Naive thymus-derived CD4-positive, alpha-beta T cell (primary cell): ENCODE measurements at regions of chr22 and their contacts with region 1.

Region 1: GRCh38 chr22:42090596-42091454 is at the start of gene NDUFA6:
- DNase-seq: peak; percentile 92 to 99 (median 98)
- ATAC-seq: peak; percentile 93
- H3K4me3 ChIP-seq: peak within 1 kb of the TSS; percentile 96
- H3K4me3 Mint-ChIP-seq: peak within 1 kb of the TSS; percentile 94 to 99 (median 98)
- H3K27ac ChIP-seq: peak within 1 kb of the TSS; percentile 96
- H3K27ac Mint-ChIP-seq: peak within 1 kb of the TSS; percentile 92 to 100 (median 99)
- H3K4me1 ChIP-seq: peaks cover 15 to 22% of the 10 kb centered on the region in 2 donors
- H3K4me1 Mint-ChIP-seq: peaks cover 14 to 56% (median 36%) of the 10 kb centered on the region in 7 donors
- H3K27me3 ChIP-seq: no peaks in the 10 kb centered on the region
- H3K27me3 Mint-ChIP-seq: no peaks in the 10 kb centered on the region
- total RNA-seq, gene NDUFA6: 35.0 to 66.4 (median 40.6) TPM

Region 2: DNA sequence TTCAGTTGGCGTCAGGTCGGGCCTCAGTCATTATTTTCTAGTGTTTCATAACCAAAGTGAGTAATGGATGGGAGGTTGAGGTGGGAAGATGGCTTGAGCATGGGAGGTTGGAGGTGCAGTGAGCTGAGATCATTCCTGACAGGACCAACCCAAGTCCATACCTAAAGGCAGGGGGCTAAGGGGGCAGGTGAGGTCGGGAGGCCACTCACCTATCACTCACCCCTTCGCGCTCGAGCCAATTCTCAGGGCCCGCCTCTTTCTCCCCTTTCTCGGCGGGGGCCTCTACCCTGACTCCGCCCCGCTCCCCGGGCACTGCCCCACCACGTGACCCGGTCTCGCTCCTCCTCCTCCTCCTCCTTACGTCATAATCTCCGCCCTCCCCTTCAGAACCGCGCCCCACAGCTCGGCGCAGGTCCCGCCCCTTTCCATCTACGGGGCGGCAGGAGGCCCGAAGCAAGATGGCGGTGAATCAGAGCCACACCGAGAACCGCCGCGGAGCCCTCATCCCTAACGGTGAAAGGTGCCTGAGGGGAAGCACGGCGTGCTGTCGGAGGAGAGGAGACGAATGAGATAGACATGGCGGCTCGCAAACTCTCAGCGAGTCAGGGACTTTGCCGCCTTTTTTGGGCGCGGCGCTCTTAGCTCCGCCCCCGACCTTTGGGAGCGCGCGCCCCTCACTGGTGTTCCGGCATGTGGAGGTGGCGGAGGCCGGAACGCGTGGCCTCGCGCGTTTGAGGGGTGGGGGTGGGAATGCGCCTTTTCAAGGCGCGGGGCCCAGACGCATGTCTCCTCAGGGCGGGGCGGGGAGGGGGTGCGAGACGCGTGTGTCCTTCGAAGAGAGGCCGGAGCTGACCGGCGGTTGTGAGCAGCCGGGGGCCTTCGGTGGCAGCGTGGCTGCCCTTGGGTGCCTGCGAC is 92.2 kb before region 1 on chr22 and contains the start of gene WBP2NL:
- CTCF ChIA-PET with region 1: no interaction called
- POLR2A ChIA-PET with region 1: interaction called, 3 read pairs
- intact Hi-C with region 1: loop called in 1 of 2 experiments (anchors 1 kb)
- DNase-seq: peak; percentile 75 to 92 (median 89)
- ATAC-seq: peak; percentile 99
- H3K4me3 ChIP-seq: peak within 1 kb of the TSS; percentile 76
- H3K4me3 Mint-ChIP-seq: peak within 1 kb of the TSS; percentile 91 to 100 (median 96)
- H3K27ac ChIP-seq: peak within 1 kb of the TSS; percentile 73
- H3K27ac Mint-ChIP-seq: peak within 1 kb of the TSS; percentile 91 to 99 (median 96)
- H3K4me1 ChIP-seq: peaks cover 6 to 7% of the 10 kb centered on the region in 2 donors
- H3K4me1 Mint-ChIP-seq: peaks cover 12 to 31% (median 22%) of the 10 kb centered on the region in 7 donors
- H3K27me3 ChIP-seq: no peaks in the 10 kb centered on the region
- H3K27me3 Mint-ChIP-seq: peaks cover 0 to 9% (median 0%) of the 10 kb centered on the region in 5 donors
- total RNA-seq, gene WBP2NL: 0.85 to 5.7 (median 3.2) TPM

Region 3: GRCh38 chr22:42114721-42115120 is 23.9 kb after region 1 on chr22:
- CTCF ChIA-PET with region 1: interaction called, 11 read pairs
- POLR2A ChIA-PET with region 1: interaction called, 6 read pairs
- intact Hi-C with region 1: no loop called
- DNase-seq: no peak
- ATAC-seq: no peak
- H3K4me3 ChIP-seq: no peak overlapping the region
- H3K4me3 Mint-ChIP-seq: no peak overlapping the region
- H3K27ac ChIP-seq: no peak overlapping the region
- H3K27ac Mint-ChIP-seq: peak overlapping the region in 1 of 9 donors; percentile 5
- H3K4me1 ChIP-seq: peaks cover under 1 to 2% of the 10 kb centered on the region in 2 donors
- H3K4me1 Mint-ChIP-seq: peaks cover 8 to 21% (median 15%) of the 10 kb centered on the region in 7 donors
- H3K27me3 ChIP-seq: no peaks in the 10 kb centered on the region
- H3K27me3 Mint-ChIP-seq: no peaks in the 10 kb centered on the region

Region 4: GRCh38 chr22:42202669-42203068 is 111.8 kb after region 1 on chr22:
- CTCF ChIA-PET with region 1: no interaction called
- POLR2A ChIA-PET with region 1: no interaction called
- intact Hi-C with region 1: loop called in 1 of 2 experiments (anchors 5 kb)
- DNase-seq: peak in 2 of 9 donors; percentile 9 to 46
- ATAC-seq: peak; percentile 67
- H3K4me3 ChIP-seq: no peak overlapping the region
- H3K4me3 Mint-ChIP-seq: peak overlapping the region in 8 of 10 donors; percentile 27 to 88 (median 60)
- H3K27ac ChIP-seq: no peak overlapping the region
- H3K27ac Mint-ChIP-seq: peak overlapping the region in 6 of 9 donors; percentile 28 to 81 (median 46)
- H3K4me1 ChIP-seq: peaks cover 19 to 26% of the 10 kb centered on the region in 2 donors
- H3K4me1 Mint-ChIP-seq: peaks cover 47 to 80% (median 70%) of the 10 kb centered on the region in 7 donors
- H3K27me3 ChIP-seq: no peaks in the 10 kb centered on the region
- H3K27me3 Mint-ChIP-seq: no peaks in the 10 kb centered on the region

Region 5: GRCh38 chr22:42369245-42370041 is 278.6 kb after region 1 on chr22:
- CTCF ChIA-PET with region 1: no interaction called
- POLR2A ChIA-PET with region 1: interaction called, 3 read pairs
- intact Hi-C with region 1: loop called (anchors 1 kb)
- DNase-seq: peak; percentile 67 to 84 (median 79)
- ATAC-seq: peak; percentile 99
- H3K4me3 ChIP-seq: peak overlapping the region; percentile 66
- H3K4me3 Mint-ChIP-seq: peak overlapping the region; percentile 87 to 99 (median 93)
- H3K27ac ChIP-seq: peak overlapping the region; percentile 30
- H3K27ac Mint-ChIP-seq: peak overlapping the region; percentile 2 to 88 (median 77)
- H3K4me1 ChIP-seq: peaks cover 4 to 11% of the 10 kb centered on the region in 2 donors
- H3K4me1 Mint-ChIP-seq: peaks cover 9 to 19% (median 14%) of the 10 kb centered on the region in 7 donors
- H3K27me3 ChIP-seq: peaks cover 0 to 18% of the 10 kb centered on the region in 2 donors
- H3K27me3 Mint-ChIP-seq: peaks cover 19 to 49% (median 25%) of the 10 kb centered on the region in 5 donors

Region 6: DNA sequence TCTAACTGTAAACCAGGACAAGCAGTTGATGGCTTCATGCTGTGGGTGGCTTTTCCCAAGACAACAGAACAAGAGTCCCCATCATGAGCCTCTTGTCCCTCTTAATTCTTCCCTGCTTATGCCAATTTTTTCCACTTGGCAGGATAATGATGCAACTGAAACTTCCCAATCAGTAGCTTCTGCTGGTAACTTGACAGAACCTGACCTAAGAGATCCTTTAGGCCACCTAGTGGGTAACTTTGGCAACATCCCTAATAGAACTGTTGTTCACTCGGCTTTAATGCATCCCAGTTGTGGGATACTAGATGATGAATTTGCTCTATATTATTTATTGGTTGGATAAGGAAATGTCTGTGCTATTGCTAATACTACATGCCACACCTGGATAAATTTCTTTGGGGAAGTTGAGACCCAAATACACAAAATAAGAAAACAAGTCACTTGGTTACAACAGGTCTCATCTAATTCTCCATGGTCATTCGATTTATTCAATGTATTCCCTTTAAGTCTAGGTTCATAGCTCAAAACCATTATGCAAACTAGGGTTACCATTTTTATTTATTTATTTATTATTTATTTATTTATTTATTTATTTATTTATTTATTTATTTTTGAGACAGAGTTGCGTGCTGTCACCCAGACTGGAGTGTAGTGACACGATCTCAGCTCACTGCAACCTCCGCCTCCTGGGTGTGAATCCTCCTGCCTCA is 382.8 kb after region 1 on chr22:
- CTCF ChIA-PET with region 1: no interaction called
- POLR2A ChIA-PET with region 1: no interaction called
- intact Hi-C with region 1: loop called in 1 of 2 experiments (anchors 1 kb)
- DNase-seq: peak in 5 of 9 donors; percentile 10 to 42 (median 29)
- ATAC-seq: peak; percentile 57
- H3K4me3 ChIP-seq: no peak overlapping the region
- H3K4me3 Mint-ChIP-seq: no peak overlapping the region
- H3K27ac ChIP-seq: no peak overlapping the region
- H3K27ac Mint-ChIP-seq: peak overlapping the region in 2 of 9 donors; percentile 2 to 16
- H3K4me1 ChIP-seq: peaks cover 0 to 7% of the 10 kb centered on the region in 2 donors
- H3K4me1 Mint-ChIP-seq: peaks cover 3 to 12% (median 9%) of the 10 kb centered on the region in 7 donors
- H3K27me3 ChIP-seq: no peaks in the 10 kb centered on the region
- H3K27me3 Mint-ChIP-seq: peaks cover 0 to 26% (median 0%) of the 10 kb centered on the region in 5 donors